Dendritic cell treated with granulocyte-macrophage colony-stimulating factor and Interleukin-4, amounts not matched to agents 40 ng/mL and 50 ng/mL, for 4 days (primary cell): ENCODE measurements at regions of chr17 and their contacts with region 1.

Region 1: DNA sequence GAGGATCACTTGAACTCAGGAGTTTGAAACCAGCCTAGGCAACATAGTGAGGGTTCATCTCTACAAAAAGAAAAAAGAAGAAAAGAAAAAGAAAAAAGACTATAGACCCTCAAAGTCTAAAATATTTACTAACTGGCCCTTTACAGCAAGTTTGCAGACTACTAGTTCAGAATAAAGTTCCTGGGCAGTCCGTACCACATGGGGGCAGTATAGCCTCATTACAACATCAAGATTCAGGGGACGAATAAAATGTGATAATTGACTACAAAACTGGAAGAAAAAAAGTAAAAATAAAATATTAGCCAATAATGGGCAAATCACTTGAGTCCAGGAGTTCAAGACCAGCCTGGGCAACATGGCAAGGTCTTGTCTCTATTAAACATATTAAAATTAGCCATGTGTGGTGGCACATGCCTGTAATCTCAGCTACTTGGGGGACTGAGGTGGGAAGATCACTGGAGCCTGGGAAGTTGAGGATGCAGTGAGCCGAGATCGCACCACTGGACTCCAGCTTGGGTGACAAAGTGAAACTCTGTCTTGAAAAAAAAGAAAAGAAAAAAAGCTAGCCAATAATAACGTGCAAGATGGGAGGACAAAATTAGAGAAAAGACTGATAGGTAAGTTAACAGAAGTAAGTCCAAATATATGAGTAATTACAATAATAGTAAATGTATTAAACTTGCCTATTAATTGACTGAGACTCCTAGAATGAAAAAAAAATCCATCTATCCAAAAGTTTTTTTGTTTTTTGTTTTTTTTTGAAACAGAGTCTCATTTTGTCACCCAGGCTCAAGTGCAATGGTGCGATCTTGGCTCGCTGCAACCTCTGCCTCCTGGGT is 129.4 kb upstream of the SEC14L1 start:
- H3K4me3 Mint-ChIP-seq: no peak overlapping the region
- H3K27ac Mint-ChIP-seq: no peak overlapping the region
- H3K4me1 Mint-ChIP-seq: no peaks in the 10 kb centered on the region
- H3K27me3 Mint-ChIP-seq: peaks cover 11% of the 10 kb centered on the region

Region 2: GRCh38 chr17:76924345-76925342 is 86.7 kb before region 1 on chr17:
- intact Hi-C with region 1: no loop called
- H3K4me3 Mint-ChIP-seq: no peak overlapping the region
- H3K27ac Mint-ChIP-seq: no peak overlapping the region
- H3K4me1 Mint-ChIP-seq: no peaks in the 10 kb centered on the region
- H3K27me3 Mint-ChIP-seq: peaks cover 6% of the 10 kb centered on the region

Region 3: GRCh38 chr17:76997981-76998531 is 13.3 kb before region 1 on chr17:
- intact Hi-C with region 1: no loop called
- H3K4me3 Mint-ChIP-seq: no peak overlapping the region
- H3K27ac Mint-ChIP-seq: no peak overlapping the region
- H3K4me1 Mint-ChIP-seq: peaks cover 8% of the 10 kb centered on the region
- H3K27me3 Mint-ChIP-seq: peaks cover 18% of the 10 kb centered on the region

Region 4: GRCh38 chr17:77068915-77069314 is 57.5 kb after region 1 on chr17:
- intact Hi-C with region 1: loop called (anchors 5 kb)
- H3K4me3 Mint-ChIP-seq: no peak overlapping the region
- H3K27ac Mint-ChIP-seq: no peak overlapping the region
- H3K4me1 Mint-ChIP-seq: no peaks in the 10 kb centered on the region
- H3K27me3 Mint-ChIP-seq: peaks cover 29% of the 10 kb centered on the region